ENCODE measurements at regions of chr5 and their contacts with region 1.

Region 1: DNA sequence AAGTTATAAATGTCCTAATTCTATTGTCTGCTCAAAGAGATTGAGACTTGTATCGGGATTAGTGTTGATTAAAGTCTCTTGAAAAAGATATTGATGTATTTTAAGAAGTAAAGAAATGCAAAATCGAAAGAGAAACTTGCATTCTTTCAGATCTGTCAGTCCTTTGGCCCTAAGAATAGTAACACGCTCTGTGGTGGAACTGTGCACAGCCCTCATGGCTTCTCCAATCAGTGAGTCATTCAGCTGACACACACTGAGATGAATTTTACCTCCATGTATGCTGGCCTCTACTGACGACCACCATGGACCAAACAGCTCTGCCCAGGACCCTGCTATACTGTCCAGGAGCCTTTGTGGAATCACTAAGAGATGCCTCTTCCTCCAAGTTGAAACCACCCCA is 232.4 kb downstream of the ESM1 start:
- DNase-seq: peak in 4 of 14 experiments; percentile 18 to 71 (median 40)
- ATAC-seq: no peak
- H3K4me3 ChIP-seq: no peak overlapping the region
- H3K4me3 Mint-ChIP-seq: no peak overlapping the region
- H3K27ac ChIP-seq: no peak overlapping the region
- H3K27ac Mint-ChIP-seq: no peak overlapping the region
- H3K4me1 ChIP-seq: peaks cover 14% of the 10 kb centered on the region
- H3K4me1 Mint-ChIP-seq: peaks cover 24% of the 10 kb centered on the region
- H3K27me3 ChIP-seq: no peaks in the 10 kb centered on the region
- H3K27me3 Mint-ChIP-seq: no peaks in the 10 kb centered on the region
- CTCF ChIP-seq: no peak

Region 2: GRCh38 chr5:54825005-54825404 is 72.0 kb after region 1 on chr5:
- CTCF ChIA-PET with region 1: no interaction called
- POLR2A ChIA-PET with region 1: no interaction called
- intact Hi-C with region 1: loop called in 1 of 2 experiments (anchors 10 kb)
- DNase-seq: no peak
- ATAC-seq: no peak
- H3K4me3 ChIP-seq: no peak overlapping the region
- H3K4me3 Mint-ChIP-seq: no peak overlapping the region
- H3K27ac ChIP-seq: no peak overlapping the region
- H3K27ac Mint-ChIP-seq: no peak overlapping the region
- H3K4me1 ChIP-seq: no peaks in the 10 kb centered on the region
- H3K4me1 Mint-ChIP-seq: no peaks in the 10 kb centered on the region
- H3K27me3 ChIP-seq: no peaks in the 10 kb centered on the region
- H3K27me3 Mint-ChIP-seq: no peaks in the 10 kb centered on the region
- CTCF ChIP-seq: no peak